Endothelial cell of umbilical vein (primary cell): ENCODE measurements at regions of chr1 and their contacts with region 1.

Region 1: DNA sequence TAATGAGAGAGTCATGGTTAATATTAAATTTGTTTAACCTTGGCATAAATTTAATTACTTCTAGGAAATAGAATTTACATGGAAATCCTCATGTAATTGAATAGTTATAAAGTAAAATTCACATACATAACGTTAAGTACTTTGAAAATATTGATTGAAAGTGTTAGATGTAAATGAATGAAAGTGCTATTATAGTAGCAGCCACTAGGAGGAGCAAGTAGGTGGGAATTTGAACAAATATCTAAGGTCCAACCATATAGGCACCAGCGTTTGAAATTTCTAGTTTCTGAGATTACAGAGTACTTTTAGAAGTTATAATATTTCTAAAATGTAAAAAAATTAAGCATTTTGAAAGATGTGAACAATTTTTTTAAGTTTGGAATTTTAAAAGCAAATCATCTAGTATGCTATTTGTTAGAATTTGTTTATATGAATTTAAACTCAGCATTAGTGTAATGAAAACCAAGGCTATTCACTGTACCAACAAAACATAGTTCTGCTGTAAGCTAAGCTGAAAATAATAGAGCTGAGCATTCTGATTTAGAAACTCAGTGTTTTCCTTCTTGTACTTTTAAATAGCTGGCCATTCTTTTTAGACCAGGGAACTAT is 3.3 kb downstream of the B3GALT2 start:
- DNase-seq: peak; percentile 73
- H3K4me3 ChIP-seq: no peak overlapping the region
- H3K27ac ChIP-seq: no peak overlapping the region
- H3K4me1 ChIP-seq: no peaks in the 10 kb centered on the region
- H3K27me3 ChIP-seq: no peaks in the 10 kb centered on the region
- CTCF ChIP-seq: peak; percentile 42 to 43
- POLR2A ChIP-seq: no peak

Region 2: GRCh38 chr1:193338194-193338593 is 155.1 kb after region 1 on chr1:
- CTCF ChIA-PET with region 1: interaction called, 11 read pairs
- POLR2A ChIA-PET with region 1: no interaction called
- dilution Hi-C with region 1: no loop called
- intact Hi-C with region 1: loop called (anchors 2 kb)
- DNase-seq: peak; percentile 27
- H3K4me3 ChIP-seq: no peak overlapping the region
- H3K27ac ChIP-seq: no peak overlapping the region
- H3K4me1 ChIP-seq: peaks cover 6% of the 10 kb centered on the region
- H3K27me3 ChIP-seq: no peaks in the 10 kb centered on the region
- CTCF ChIP-seq: no peak
- POLR2A ChIP-seq: no peak

Region 3: GRCh38 chr1:193368302-193368701 is 185.2 kb after region 1 on chr1:
- CTCF ChIA-PET with region 1: no interaction called
- POLR2A ChIA-PET with region 1: no interaction called
- dilution Hi-C with region 1: no loop called
- intact Hi-C with region 1: no loop called
- DNase-seq: peak; percentile 47
- H3K4me3 ChIP-seq: no peak overlapping the region
- H3K27ac ChIP-seq: no peak overlapping the region
- H3K4me1 ChIP-seq: no peaks in the 10 kb centered on the region
- H3K27me3 ChIP-seq: no peaks in the 10 kb centered on the region
- CTCF ChIP-seq: no peak
- POLR2A ChIP-seq: no peak

Region 4: GRCh38 chr1:193406901-193407300 is 223.8 kb after region 1 on chr1:
- CTCF ChIA-PET with region 1: no interaction called
- POLR2A ChIA-PET with region 1: no interaction called
- dilution Hi-C with region 1: no loop called
- intact Hi-C with region 1: loop called (anchors 10 kb)
- DNase-seq: peak; percentile 64
- H3K4me3 ChIP-seq: no peak overlapping the region
- H3K27ac ChIP-seq: no peak overlapping the region
- H3K4me1 ChIP-seq: peaks cover 11% of the 10 kb centered on the region
- H3K27me3 ChIP-seq: no peaks in the 10 kb centered on the region
- CTCF ChIP-seq: peak; percentile 45 to 59
- POLR2A ChIP-seq: no peak

Region 5: DNA sequence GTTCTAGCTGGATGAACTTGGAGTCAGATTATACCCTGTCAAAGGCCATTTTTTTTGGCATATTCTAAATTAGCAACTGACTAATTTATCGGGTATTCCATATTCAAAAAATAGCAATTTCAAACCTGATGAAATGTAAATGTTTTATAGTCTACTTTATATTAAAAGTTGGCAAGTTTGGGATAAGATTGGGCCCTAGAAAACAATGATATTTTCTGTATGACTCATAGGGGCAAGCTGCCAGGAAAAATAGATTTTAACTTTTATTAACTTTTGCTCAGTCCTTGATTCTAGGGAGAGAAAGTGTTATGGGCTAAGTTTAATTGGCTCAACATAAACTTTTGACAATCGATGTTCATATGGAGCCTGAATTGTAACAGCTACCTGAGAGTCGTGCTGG is 580.1 kb after region 1 on chr1:
- CTCF ChIA-PET with region 1: no interaction called
- POLR2A ChIA-PET with region 1: no interaction called
- dilution Hi-C with region 1: no loop called
- intact Hi-C with region 1: loop called (anchors 10 kb)
- DNase-seq: peak; percentile 80
- H3K4me3 ChIP-seq: no peak overlapping the region
- H3K27ac ChIP-seq: no peak overlapping the region
- H3K4me1 ChIP-seq: peaks cover 6% of the 10 kb centered on the region
- H3K27me3 ChIP-seq: no peaks in the 10 kb centered on the region
- CTCF ChIP-seq: no peak
- POLR2A ChIP-seq: no peak

Region 6: GRCh38 chr1:194295685-194296084 is 1112.6 kb after region 1 on chr1:
- CTCF ChIA-PET with region 1: interaction called, 5 read pairs
- POLR2A ChIA-PET with region 1: no interaction called
- dilution Hi-C with region 1: no loop called
- intact Hi-C with region 1: loop called (anchors 1 kb)
- DNase-seq: peak; percentile 52
- H3K4me3 ChIP-seq: no peak overlapping the region
- H3K27ac ChIP-seq: no peak overlapping the region
- H3K4me1 ChIP-seq: no peaks in the 10 kb centered on the region
- H3K27me3 ChIP-seq: no peaks in the 10 kb centered on the region
- CTCF ChIP-seq: peak; percentile 28 to 54
- POLR2A ChIP-seq: no peak